Heart left ventricle (tissue), 16 donors: ENCODE measurements at regions of chr12 and their contacts with region 1.

Region 1: DNA sequence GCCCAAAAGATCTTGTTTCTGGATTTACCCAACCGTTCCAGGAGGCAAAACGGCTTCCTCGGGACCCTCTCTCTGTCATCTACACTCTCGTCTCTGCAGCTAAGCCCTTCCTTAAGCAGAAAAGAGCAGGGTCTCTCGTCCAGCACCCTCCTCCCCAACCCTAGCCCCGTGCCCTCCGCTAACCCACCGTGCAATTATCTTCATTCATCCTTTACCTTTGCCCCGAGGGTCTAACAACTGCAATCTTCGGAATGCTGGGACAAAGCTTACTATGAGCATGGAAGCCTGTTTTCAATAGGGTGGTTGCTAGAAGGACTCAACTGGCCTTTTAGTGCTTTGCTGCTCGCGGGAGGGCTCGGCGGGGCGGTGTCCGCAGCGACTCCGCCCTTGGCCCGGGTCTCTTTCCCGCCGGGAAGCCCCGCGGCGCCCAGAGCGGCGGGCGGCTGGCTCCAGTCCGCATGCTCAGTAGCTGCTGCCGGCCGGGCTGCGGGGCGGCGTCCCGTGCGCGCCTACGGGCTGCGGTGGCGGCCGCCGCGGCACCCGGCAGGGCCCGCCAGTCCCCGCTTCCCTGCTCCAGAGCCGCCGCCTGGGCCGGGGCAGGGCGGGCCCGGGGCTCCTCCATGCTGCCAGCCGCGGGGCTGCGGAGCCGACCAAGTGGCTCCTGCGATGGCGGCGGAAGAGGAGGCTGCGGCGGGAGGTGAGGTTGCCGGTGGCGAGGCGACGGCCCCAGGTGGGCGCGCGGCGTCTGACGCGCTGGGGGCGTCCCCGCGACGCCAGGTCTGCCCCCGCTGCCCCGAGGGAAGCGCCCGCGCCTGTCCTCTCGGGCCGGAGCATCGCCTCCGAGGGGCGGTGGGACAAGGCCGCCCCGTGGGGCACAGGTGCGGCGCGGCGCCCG is at the start of gene BMAL2:
- DNase-seq: peak; percentile 27 to 68 (median 43)
- ATAC-seq: peak in 3 of 4 donors; percentile 64 to 81 (median 80)
- H3K4me3 ChIP-seq: peak within 1 kb of the TSS; percentile 55 to 78 (median 65)
- H3K27ac ChIP-seq: peak within 1 kb of the TSS in 2 of 12 donors; percentile 5 to 78
- H3K4me1 ChIP-seq: peaks cover 0 to 30% (median 6%) of the 10 kb centered on the region in 12 donors
- H3K27me3 ChIP-seq: peaks cover 0 to 6% (median 0%) of the 10 kb centered on the region in 9 donors
- CTCF ChIP-seq: no peak
- POLR2A ChIP-seq: no peak
- total RNA-seq, gene BMAL2: 1.1 to 10.7 (median 2.9) TPM

Region 2: GRCh38 chr12:27434673-27435565 is 102.3 kb after region 1 on chr12:
- intact Hi-C with region 1: no loop called
- DNase-seq: no peak
- ATAC-seq: peak; percentile 53 to 63 (median 59)
- H3K4me3 ChIP-seq: no peak overlapping the region
- H3K27ac ChIP-seq: peak overlapping the region in 6 of 12 donors; percentile 3 to 45 (median 27)
- H3K4me1 ChIP-seq: peaks cover 0 to 19% (median 3%) of the 10 kb centered on the region in 12 donors
- H3K27me3 ChIP-seq: no peaks in the 10 kb centered on the region
- CTCF ChIP-seq: peak; percentile 30 to 77 (median 57)
- POLR2A ChIP-seq: no peak

Region 3: GRCh38 chr12:27453421-27453820 is 120.8 kb after region 1 on chr12:
- intact Hi-C with region 1: no loop called
- DNase-seq: peak in 1 of 5 donors; percentile 35
- ATAC-seq: peak in 3 of 4 donors; percentile 37 to 71 (median 56)
- H3K4me3 ChIP-seq: no peak overlapping the region
- H3K27ac ChIP-seq: peak overlapping the region in 3 of 12 donors; percentile 22 to 38 (median 27)
- H3K4me1 ChIP-seq: peaks cover 0 to 20% (median 2%) of the 10 kb centered on the region in 12 donors
- H3K27me3 ChIP-seq: no peaks in the 10 kb centered on the region
- CTCF ChIP-seq: no peak
- POLR2A ChIP-seq: no peak

Region 4: GRCh38 chr12:27652174-27652763 is 319.6 kb after region 1 on chr12:
- intact Hi-C with region 1: loop called in 3 of 10 experiments (anchors 10 kb)
- DNase-seq: peak in 2 of 5 donors; percentile 56 to 73
- ATAC-seq: peak; percentile 67 to 87 (median 78)
- H3K4me3 ChIP-seq: no peak overlapping the region
- H3K27ac ChIP-seq: no peak overlapping the region
- H3K4me1 ChIP-seq: peaks cover 0 to 10% (median 2%) of the 10 kb centered on the region in 12 donors
- H3K27me3 ChIP-seq: no peaks in the 10 kb centered on the region
- CTCF ChIP-seq: peak; percentile 79 to 95 (median 90)
- POLR2A ChIP-seq: no peak

Region 5: DNA sequence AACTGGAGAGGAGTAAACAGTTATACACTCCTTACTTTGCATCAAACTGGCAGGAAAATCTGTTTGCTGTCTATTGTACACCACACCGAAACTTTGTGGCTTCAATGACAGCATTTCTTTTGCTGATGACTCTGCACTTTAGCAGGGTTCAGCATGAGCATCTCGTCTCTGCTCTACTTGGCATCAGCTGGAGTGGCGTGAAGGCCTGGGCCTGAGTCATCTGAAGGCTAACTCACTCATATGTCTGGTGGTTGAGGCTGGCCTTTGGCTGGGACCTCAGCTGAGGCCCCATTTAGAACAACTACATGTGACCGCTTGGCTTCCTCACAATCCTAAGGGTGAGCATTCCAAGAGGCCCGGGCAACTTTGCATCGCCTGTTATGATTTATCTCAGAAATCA is 334.9 kb after region 1 on chr12:
- intact Hi-C with region 1: loop called in 4 of 10 experiments (anchors 10 kb)
- DNase-seq: peak in 2 of 5 donors; percentile 31 to 70
- ATAC-seq: peak; percentile 59 to 92 (median 70)
- H3K4me3 ChIP-seq: no peak overlapping the region
- H3K27ac ChIP-seq: peak overlapping the region in 3 of 12 donors; percentile 19 to 39 (median 39)
- H3K4me1 ChIP-seq: peaks cover 0 to 16% (median 5%) of the 10 kb centered on the region in 12 donors
- H3K27me3 ChIP-seq: no peaks in the 10 kb centered on the region
- CTCF ChIP-seq: no peak
- POLR2A ChIP-seq: no peak

Region 6: GRCh38 chr12:27673101-27673718 is 340.6 kb after region 1 on chr12:
- intact Hi-C with region 1: loop called in 4 of 10 experiments (anchors 10 kb)
- DNase-seq: no peak
- ATAC-seq: peak; percentile 83 to 94 (median 88)
- H3K4me3 ChIP-seq: peak overlapping the region in 1 of 12 donors; percentile 14
- H3K27ac ChIP-seq: peak overlapping the region; percentile 22 to 76 (median 58)
- H3K4me1 ChIP-seq: peaks cover 0 to 38% (median 25%) of the 10 kb centered on the region in 12 donors
- H3K27me3 ChIP-seq: no peaks in the 10 kb centered on the region
- CTCF ChIP-seq: no peak
- POLR2A ChIP-seq: no peak